ENCODE measurements at regions of chr17 and their contacts with region 1.

Region 1: DNA sequence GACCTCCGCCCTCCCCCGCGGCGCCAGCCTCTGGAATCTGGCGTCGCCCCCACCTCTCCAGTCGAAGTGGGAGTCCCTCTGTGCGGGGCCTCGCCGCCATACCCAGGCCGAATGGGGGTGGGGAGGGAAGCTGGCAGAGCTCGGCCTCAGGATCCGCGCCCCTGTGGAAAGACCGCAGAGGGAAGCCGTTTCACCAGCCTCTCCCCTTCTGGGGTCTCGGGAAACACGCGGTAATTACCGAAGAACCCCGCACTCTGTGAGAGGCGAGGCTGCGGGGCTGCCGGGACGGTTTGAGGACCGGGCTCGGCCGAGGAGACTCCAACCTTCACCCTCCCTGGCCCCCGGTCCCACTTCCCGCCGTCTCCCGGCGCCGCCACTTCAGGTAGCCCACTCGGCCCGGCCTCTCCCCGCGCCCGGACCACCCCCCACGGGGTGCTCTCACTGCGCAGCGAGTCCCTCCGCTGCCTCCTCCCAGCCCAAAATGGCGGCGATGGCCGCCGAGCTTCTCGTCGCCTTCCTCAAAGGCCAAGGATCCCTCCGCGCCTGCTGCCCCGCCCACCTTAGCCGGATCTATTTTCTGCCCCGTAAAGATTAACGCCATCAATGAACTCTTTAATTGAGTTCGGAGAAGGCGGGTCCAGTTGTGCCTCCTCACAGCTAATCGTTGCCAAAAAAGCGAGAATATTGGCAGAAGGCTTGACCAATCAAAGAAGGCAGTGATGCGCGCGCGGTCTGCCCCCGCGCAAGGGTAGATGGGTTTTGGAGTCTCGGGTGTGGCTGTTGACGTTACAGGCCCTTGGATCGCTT is 453 bp upstream of the HEXIM2 start:
- DNase-seq: peak; percentile 100
- H3K4me3 Mint-ChIP-seq: peak overlapping the region; percentile 91
- H3K27ac Mint-ChIP-seq: peak overlapping the region; percentile 97
- H3K4me1 Mint-ChIP-seq: peaks cover 46% of the 10 kb centered on the region
- H3K27me3 Mint-ChIP-seq: no peaks in the 10 kb centered on the region
- CTCF ChIP-seq: no peak

Region 2: GRCh38 chr17:45197555-45198334 is 36.5 kb after region 1 on chr17:
- CTCF ChIA-PET with region 1: interaction called, 27 read pairs
- intact Hi-C with region 1: no loop called
- DNase-seq: peak; percentile 100
- H3K4me3 Mint-ChIP-seq: no peak overlapping the region
- H3K27ac Mint-ChIP-seq: peak overlapping the region; percentile 86
- H3K4me1 Mint-ChIP-seq: peaks cover 30% of the 10 kb centered on the region
- H3K27me3 Mint-ChIP-seq: no peaks in the 10 kb centered on the region
- CTCF ChIP-seq: peak; percentile 100

Region 3: DNA sequence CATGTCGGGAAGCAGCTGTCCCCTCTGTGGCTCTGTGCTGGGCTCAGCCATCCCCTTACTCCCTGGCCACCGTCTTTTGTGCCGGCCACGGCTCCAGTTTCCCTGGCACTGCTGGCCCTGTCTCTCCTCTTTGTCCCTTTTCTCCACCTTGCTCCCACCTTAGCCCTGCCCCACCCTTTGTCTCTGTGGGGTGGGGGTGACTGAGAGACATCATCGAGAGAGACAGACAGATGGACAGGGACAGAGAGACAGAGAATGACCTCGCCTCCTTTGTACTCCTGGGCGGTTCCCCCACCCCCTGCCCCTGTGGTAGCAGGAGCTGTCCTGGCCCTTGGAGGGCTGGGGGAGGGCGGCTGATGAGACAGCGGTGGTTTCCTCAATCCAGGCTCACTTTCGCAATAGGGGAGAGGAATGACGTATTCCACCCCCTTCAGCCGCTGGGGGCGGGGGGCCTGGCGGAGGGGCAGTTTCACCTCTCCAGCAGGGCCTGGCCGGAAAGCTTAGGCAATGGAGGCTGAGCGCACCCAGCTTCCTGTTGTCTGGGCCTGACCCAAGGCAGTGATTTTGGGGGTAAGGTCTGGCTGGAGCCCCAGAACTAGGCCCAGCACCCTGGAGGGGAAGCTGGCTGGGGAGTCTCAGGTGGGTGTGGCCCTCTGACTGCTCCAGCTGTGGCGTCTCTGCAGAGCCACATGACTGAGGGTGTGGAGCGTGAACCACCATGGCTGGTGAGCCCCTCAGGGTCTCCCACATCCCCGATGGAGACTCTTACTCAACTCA is 67.7 kb after region 1 on chr17:
- CTCF ChIA-PET with region 1: no interaction called
- intact Hi-C with region 1: no loop called
- DNase-seq: peak; percentile 58
- H3K4me3 Mint-ChIP-seq: no peak overlapping the region
- H3K27ac Mint-ChIP-seq: no peak overlapping the region
- H3K4me1 Mint-ChIP-seq: peaks cover 22% of the 10 kb centered on the region
- H3K27me3 Mint-ChIP-seq: peaks cover 23% of the 10 kb centered on the region
- CTCF ChIP-seq: no peak

Region 4: GRCh38 chr17:45410144-45411091 is 249.2 kb after region 1 on chr17:
- CTCF ChIA-PET with region 1: no interaction called
- intact Hi-C with region 1: no loop called
- DNase-seq: no peak
- H3K4me3 Mint-ChIP-seq: no peak overlapping the region
- H3K27ac Mint-ChIP-seq: peak overlapping the region; percentile 20
- H3K4me1 Mint-ChIP-seq: peaks cover 79% of the 10 kb centered on the region
- H3K27me3 Mint-ChIP-seq: no peaks in the 10 kb centered on the region
- CTCF ChIP-seq: no peak